Left cardiac atrium (tissue), 4 donors: ENCODE measurements at regions of chr19 and their contacts with region 1.

Region 1: DNA sequence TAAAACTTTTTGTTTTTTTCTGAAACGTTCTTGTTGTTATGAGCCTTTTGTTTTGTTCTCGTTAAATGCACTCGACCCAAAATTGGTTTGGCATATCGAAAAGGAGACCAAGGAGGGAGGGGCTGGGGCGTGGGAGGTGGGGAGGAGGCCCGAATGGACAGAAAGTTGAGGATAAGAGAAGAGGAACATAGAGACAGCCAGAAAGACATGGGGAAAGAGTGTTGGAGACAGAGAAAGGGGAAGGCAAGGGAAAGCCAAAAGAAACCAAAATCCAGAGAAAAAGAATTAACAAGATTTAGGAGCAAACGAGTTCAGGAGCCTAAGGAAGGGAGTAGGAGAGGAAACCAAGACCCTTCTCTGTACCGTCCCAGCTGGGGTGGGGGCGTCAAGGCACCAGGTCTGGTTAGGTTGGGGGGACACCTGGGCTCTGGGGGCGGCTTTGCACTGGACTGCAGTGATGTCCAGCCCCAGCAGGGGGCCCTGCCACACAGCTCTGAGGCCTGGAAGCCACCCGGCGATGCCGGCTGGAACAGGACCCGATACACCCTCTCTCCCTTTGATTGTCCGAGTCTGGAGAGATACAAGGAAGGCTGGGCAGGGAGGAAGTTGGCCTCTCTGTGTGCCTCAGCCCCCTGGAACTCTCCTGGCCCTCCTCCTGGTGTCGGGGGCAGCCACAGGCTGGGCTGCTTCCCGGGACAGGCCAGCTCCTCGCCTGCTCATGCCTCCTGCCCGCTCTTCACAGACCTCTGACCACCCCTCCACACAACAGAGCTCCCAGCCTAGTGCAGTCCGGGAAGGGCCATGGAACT is 11.6 kb upstream of the ASF1B start:
- DNase-seq: peak; percentile 85
- ATAC-seq: peak; percentile 83 to 87

Region 2: GRCh38 chr19:14073261-14073924 is 74.6 kb before region 1 on chr19:
- intact Hi-C with region 1: no loop called
- DNase-seq: peak; percentile 82
- ATAC-seq: peak; percentile 34 to 55

Region 3: GRCh38 chr19:14203177-14203576 is 55.2 kb after region 1 on chr19:
- intact Hi-C with region 1: loop called in 1 of 2 experiments (anchors 10 kb)
- DNase-seq: no peak
- ATAC-seq: no peak